ENCODE measurements at regions of chr3 and their contacts with region 1.

Region 1: GRCh38 chr3:100954990-100955389 is 38.2 kb downstream of the ABI3BP start:
- DNase-seq: no peak
- ATAC-seq: no peak
- H3K4me3 ChIP-seq: no peak overlapping the region
- H3K27ac ChIP-seq: no peak overlapping the region
- H3K4me1 ChIP-seq: no peaks in the 10 kb centered on the region
- H3K27me3 ChIP-seq: no peaks in the 10 kb centered on the region
- CTCF ChIP-seq: no peak
- EP300 ChIP-seq: no peak
- POLR2A ChIP-seq: no peak
- RAD21 ChIP-seq: no peak

Region 2: DNA sequence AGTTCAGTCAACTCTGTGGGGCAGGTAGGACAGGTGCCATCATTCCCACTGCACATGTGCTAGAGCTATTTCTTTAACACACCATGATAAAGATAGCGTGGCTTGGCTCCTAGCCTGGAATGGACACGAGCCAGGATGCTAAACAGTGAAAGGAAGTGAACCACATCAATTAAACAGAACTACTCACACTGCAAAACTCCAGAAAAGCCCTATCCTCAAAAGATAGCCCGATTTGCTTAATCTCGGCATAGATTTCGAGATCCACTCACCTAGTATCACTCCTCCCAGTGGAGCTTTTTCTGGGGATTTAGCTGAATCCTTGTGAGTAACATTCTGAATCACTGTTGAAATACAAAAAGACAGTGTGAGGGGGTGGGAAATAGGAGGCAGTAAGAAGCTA is 79.8 kb before region 1 on chr3:
- CTCF ChIA-PET with region 1: no interaction called
- POLR2A ChIA-PET with region 1: no interaction called
- in situ Hi-C with region 1: no loop called
- intact Hi-C with region 1: loop called (anchors 10 kb)
- DNase-seq: no peak
- ATAC-seq: no peak
- H3K4me3 ChIP-seq: no peak overlapping the region
- H3K27ac ChIP-seq: no peak overlapping the region
- H3K4me1 ChIP-seq: no peaks in the 10 kb centered on the region
- H3K27me3 ChIP-seq: no peaks in the 10 kb centered on the region
- CTCF ChIP-seq: no peak
- EP300 ChIP-seq: no peak
- POLR2A ChIP-seq: no peak
- RAD21 ChIP-seq: no peak

Measured in K562 (cell line).